Activated CD4-positive, alpha-beta memory T cell treated with anti-CD3 and anti-CD28 coated beads for 36 hours (primary cell): ENCODE measurements at regions of chr2 and their contacts with region 1.

Region 1: GRCh38 chr2:27409321-27410073 is at the start of gene PPM1G:
- DNase-seq: peak; percentile 98
- H3K4me3 Mint-ChIP-seq: peak within 1 kb of the TSS; percentile 88
- H3K27ac Mint-ChIP-seq: peak within 1 kb of the TSS; percentile 87
- H3K4me1 Mint-ChIP-seq: peaks cover 32% of the 10 kb centered on the region
- H3K27me3 Mint-ChIP-seq: no peaks in the 10 kb centered on the region
- total RNA-seq, gene PPM1G: 127 to 132 TPM

Region 2: GRCh38 chr2:27322766-27323595 is 86.5 kb before region 1 on chr2 and contains the start of gene MPV17:
- CTCF ChIA-PET with region 1: no interaction called
- POLR2A ChIA-PET with region 1: no interaction called
- intact Hi-C with region 1: loop called (anchors 1 kb)
- DNase-seq: peak; percentile 94
- H3K4me3 Mint-ChIP-seq: peak within 1 kb of the TSS; percentile 93
- H3K27ac Mint-ChIP-seq: peak within 1 kb of the TSS; percentile 88
- H3K4me1 Mint-ChIP-seq: peaks cover 18% of the 10 kb centered on the region
- H3K27me3 Mint-ChIP-seq: no peaks in the 10 kb centered on the region
- total RNA-seq, gene MPV17: 85.5 to 86.0 TPM

Region 3: DNA sequence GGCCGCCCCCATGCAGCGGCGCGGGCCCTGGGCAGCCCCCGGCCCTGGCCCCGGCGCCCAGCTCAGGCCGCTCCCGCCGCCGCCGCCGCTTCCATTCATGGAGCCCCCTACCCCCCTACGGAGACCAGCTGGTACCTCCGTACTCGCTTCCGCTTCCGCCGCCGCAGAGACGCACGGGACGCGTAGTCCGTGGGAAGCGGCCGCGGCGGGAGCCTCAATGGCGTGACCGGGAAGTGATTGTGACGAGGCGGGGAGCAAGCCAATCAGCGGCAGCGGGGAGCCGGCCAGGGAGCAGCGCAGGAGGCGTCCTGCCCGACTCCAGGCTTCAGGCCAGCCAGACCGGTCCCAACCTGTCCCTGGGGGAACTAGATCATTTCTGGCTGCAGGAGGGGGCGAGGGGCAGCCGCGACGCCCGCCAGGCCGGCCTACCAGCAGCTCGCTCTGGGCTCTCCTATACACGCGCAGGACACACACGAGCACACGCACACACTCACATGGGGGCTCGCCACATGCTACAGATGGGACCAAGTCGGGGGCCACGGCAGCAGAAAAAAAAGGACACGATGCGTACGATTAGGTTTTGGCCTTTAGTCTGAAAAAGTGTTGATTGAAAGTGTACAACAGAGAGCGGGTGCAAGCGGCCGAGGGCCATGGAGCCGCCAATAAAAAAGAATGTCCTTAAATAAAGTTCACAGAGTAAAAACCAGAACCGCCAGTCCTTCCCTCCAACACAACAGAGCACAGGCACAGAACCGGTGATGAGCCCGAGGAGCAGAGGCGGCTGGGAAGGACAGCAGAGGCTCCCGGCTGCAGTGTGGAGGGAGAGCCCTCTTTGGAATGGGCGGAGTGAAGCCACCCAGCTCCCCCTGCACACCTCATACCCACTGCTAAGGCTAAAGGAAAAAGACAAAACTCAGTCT is 28.6 kb before region 1 on chr2 and contains the start of gene ZNF513:
- CTCF ChIA-PET with region 1: interaction called, 4 read pairs
- POLR2A ChIA-PET with region 1: interaction called, 18 read pairs
- intact Hi-C with region 1: loop called (anchors 1 kb)
- DNase-seq: peak; percentile 94
- H3K4me3 Mint-ChIP-seq: peak within 1 kb of the TSS; percentile 90
- H3K27ac Mint-ChIP-seq: peak within 1 kb of the TSS; percentile 80
- H3K4me1 Mint-ChIP-seq: peaks cover 22% of the 10 kb centered on the region
- H3K27me3 Mint-ChIP-seq: no peaks in the 10 kb centered on the region
- total RNA-seq, gene ZNF513: 8.6 to 9.7 TPM